ENCODE measurements at regions of chr11 and their contacts with region 1.

Region 1: DNA sequence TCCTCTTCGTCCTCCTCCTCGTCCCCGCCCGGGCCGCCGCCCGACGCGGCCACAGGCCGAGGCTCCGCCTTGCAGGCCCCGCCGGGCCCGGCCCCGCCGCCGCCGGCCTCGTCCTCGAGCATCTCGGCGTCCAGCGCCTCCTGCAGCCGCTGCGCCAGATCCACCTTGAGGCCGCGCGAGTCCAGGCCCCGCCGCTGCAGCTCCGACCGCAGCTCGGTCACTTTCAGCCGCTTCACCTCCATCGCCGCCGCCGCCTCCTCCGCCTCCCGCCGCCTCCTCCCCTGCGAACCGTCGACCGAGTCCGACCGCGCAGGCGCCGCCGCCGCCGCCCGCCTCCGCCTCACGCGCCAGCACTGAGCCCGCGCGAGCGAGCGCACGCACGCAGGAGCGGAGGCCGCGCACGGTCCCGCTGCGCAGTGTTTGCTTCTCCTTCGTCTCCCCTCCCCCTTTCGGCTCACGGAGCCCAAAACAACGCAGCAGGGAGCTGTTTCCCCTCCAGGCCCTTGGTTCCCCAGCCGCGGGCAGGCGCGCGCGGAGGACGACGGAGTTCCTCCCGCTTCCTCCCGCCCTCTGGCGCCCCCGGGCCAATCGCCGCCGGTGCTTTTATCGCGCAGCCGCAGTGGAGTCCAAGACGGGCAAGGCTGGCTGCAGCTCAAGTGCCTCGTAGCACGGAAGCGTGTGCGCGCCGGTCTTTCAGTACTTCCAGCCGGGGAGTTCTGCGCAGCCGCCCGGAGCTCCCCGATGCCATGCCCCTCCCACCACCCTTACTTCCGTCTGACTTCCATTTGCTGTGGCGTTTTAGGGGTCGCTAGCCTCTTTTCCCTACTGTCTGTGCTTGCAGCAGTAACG is at the start of gene HNRNPUL2:
- DNase-seq: peak; percentile 99
- ATAC-seq: peak; percentile 89
- H3K4me3 Mint-ChIP-seq: peak within 1 kb of the TSS; percentile 87
- H3K27ac Mint-ChIP-seq: peak within 1 kb of the TSS; percentile 97
- H3K4me1 Mint-ChIP-seq: peaks cover 41% of the 10 kb centered on the region
- H3K27me3 Mint-ChIP-seq: no peaks in the 10 kb centered on the region
- total RNA-seq, gene HNRNPUL2: 48.7 to 59.6 TPM

Region 2: DNA sequence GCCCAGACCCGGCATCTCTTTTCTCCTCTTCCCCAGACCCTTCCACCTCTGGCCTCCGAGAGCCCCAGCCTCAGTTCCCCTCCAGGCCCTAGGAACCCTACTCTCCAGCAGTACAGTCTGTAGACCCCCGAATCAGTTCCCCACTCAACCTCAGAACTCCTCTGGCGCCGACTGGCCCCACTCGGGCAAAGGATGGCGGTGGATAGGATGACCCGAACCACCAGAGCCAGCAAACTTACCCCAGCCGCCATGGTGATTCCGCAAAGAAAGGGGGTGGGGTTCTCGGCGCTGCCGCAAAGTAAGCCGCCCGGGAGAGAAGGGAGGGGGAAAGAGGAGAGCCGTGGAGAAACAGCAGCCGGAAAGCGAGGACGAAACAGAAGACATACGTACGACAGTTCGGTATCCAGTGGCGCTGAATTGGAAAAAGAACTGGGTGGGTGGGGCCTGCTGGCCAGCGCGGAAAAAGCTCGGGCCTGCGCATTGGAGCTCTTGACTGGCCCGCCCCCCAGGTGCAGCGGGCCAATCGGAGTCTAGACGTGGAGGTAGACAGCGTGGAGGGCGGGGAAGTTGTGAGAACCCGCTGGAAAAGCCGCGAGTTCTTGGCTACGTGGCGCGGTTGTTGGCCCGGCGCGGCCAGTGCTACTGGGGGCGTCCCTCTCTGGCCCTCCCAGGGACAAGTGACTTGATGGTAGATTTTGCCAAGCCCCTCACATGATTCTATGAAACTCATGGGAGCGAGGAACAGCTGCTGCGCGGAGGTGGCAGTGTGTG is 153.4 kb before region 1 on chr11 and contains the start of gene EEF1G:
- CTCF ChIA-PET with region 1: no interaction called
- POLR2A ChIA-PET with region 1: interaction called, 14 read pairs
- intact Hi-C with region 1: loop called in 1 of 2 experiments (anchors 1 kb)
- DNase-seq: peak; percentile 99
- ATAC-seq: peak; percentile 97
- H3K4me3 Mint-ChIP-seq: peak within 1 kb of the TSS; percentile 93
- H3K27ac Mint-ChIP-seq: peak within 1 kb of the TSS; percentile 97
- H3K4me1 Mint-ChIP-seq: peaks cover 43% of the 10 kb centered on the region
- H3K27me3 Mint-ChIP-seq: no peaks in the 10 kb centered on the region
- total RNA-seq, gene EEF1G: 1,986 to 2,351 TPM

Region 3: DNA sequence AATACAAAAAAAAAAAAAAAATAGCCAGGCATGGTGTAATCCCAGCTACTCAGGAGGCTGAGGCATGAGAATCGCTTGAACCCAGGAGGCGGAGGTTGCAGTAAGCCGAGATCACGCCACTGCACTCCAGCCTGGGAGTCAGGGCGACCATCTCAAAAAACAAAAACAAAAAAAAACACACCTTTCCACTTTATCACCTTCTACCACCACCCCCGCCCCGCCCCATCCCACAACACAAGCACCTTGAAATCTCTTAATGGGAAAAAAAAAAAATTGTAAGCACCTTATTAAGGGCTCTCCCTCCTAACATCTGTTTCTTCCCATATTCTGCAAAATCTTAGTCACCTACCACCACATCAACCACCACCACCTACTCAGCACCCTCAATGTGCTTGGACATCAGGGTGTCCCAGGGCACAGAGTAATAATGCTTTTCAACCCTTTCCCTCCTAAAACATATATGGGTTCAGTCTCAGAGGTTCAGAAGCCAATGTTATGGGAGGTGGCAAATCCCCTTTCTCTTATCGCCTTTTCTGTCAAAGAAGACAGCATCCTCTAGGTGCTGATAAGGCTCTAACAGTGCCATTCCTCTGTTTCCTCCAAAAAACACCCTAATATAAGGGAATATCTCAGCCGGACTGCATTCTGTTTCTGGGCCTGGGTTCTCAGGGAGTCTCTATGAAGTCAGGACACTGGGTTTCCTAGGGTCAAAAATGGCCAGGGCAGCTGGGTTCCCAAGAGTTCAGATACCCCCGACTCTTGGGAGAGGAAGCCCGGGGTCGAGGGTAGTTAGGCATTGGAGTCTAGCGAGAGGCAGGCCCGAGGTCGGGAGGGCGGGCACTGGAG is 74.8 kb before region 1 on chr11:
- CTCF ChIA-PET with region 1: no interaction called
- POLR2A ChIA-PET with region 1: interaction called, 13 read pairs
- intact Hi-C with region 1: loop called in 1 of 2 experiments (anchors 1 kb)
- DNase-seq: no peak
- ATAC-seq: no peak
- H3K4me3 Mint-ChIP-seq: peak overlapping the region; percentile 88
- H3K27ac Mint-ChIP-seq: peak overlapping the region; percentile 91
- H3K4me1 Mint-ChIP-seq: peaks cover 23% of the 10 kb centered on the region
- H3K27me3 Mint-ChIP-seq: no peaks in the 10 kb centered on the region

Region 4: GRCh38 chr11:62753736-62754603 is 26.8 kb after region 1 on chr11 and contains the start of gene ZBTB3:
- CTCF ChIA-PET with region 1: interaction called, 12 read pairs
- POLR2A ChIA-PET with region 1: interaction called, 32 read pairs
- intact Hi-C with region 1: loop called (anchors 1 kb)
- DNase-seq: peak; percentile 98
- ATAC-seq: peak; percentile 98
- H3K4me3 Mint-ChIP-seq: peak within 1 kb of the TSS; percentile 96
- H3K27ac Mint-ChIP-seq: peak within 1 kb of the TSS; percentile 97
- H3K4me1 Mint-ChIP-seq: peaks cover 26% of the 10 kb centered on the region
- H3K27me3 Mint-ChIP-seq: no peaks in the 10 kb centered on the region
- total RNA-seq, gene ZBTB3: 6.0 to 10.2 TPM

Region 5: DNA sequence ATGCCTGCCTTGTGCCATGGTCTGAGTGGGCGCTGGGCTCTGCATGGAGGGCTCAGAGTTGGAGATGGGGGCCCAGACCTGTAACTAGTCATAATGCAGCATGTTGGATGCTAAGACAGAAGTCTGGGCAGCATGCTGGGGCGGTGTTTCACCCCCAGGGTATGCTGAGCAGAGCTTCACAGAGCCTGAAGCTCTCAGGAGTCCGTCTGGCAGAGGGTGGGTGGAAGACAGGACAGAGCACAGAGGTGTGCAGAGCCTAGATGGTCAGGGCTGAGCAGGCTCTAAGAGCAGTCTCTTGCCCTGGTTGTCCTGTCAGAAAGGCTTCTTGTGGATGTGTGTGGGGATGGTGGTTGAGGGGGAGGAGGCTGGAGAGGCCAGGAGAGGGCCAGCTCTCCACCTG is 51.3 kb after region 1 on chr11:
- CTCF ChIA-PET with region 1: no interaction called
- POLR2A ChIA-PET with region 1: no interaction called
- intact Hi-C with region 1: no loop called
- DNase-seq: no peak
- ATAC-seq: no peak
- H3K4me3 Mint-ChIP-seq: no peak overlapping the region
- H3K27ac Mint-ChIP-seq: peak overlapping the region; percentile 15
- H3K4me1 Mint-ChIP-seq: peaks cover 21% of the 10 kb centered on the region
- H3K27me3 Mint-ChIP-seq: no peaks in the 10 kb centered on the region

Region 6: DNA sequence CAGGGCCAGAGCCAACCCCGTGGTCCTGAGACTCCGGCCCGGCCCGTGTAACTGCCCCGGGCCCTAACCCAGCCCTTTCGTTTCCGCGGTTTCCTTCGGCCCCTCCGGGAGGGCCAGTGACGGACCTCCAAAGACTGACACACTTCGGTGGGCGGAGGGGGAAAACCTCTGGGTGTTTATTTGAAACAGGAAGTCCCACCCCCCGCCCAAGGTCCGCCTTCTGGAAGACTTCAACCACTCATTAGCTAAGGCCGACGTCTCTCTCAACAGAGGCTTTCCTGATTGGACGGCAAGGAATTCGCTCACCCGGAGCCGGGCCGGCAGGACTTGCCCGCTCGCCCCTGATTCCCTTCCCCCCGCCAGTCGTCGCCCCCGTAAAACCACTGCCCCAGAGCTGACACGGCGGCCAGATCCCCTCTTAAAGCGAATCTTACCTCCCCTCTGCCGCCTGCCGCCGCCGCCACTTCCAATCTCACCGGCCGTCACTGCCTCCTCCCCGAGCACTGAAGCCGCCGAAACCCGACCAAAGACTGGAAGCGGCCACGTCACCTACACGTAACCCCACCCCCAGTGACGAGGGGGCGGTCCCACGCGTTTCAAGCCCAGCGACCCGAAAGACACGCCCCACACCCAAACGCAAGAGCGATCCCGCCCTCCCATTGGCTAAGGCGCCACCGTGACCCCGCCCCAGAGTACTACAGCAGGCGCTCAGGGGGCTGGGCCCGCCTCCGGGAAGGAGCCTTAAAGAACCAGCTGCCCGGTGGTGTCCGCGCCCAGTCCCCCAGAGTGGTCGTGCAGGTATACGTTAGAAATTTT is 104.6 kb after region 1 on chr11 and contains the start of gene STX5:
- CTCF ChIA-PET with region 1: interaction called, 3 read pairs
- POLR2A ChIA-PET with region 1: interaction called, 3 read pairs
- intact Hi-C with region 1: loop called in 1 of 2 experiments (anchors 1 kb)
- DNase-seq: peak; percentile 100
- ATAC-seq: peak; percentile 95
- H3K4me3 Mint-ChIP-seq: peak within 1 kb of the TSS; percentile 84
- H3K27ac Mint-ChIP-seq: peak within 1 kb of the TSS; percentile 99
- H3K4me1 Mint-ChIP-seq: peaks cover 38% of the 10 kb centered on the region
- H3K27me3 Mint-ChIP-seq: no peaks in the 10 kb centered on the region
- total RNA-seq, gene STX5: 19.3 to 21.8 TPM

Region 7: DNA sequence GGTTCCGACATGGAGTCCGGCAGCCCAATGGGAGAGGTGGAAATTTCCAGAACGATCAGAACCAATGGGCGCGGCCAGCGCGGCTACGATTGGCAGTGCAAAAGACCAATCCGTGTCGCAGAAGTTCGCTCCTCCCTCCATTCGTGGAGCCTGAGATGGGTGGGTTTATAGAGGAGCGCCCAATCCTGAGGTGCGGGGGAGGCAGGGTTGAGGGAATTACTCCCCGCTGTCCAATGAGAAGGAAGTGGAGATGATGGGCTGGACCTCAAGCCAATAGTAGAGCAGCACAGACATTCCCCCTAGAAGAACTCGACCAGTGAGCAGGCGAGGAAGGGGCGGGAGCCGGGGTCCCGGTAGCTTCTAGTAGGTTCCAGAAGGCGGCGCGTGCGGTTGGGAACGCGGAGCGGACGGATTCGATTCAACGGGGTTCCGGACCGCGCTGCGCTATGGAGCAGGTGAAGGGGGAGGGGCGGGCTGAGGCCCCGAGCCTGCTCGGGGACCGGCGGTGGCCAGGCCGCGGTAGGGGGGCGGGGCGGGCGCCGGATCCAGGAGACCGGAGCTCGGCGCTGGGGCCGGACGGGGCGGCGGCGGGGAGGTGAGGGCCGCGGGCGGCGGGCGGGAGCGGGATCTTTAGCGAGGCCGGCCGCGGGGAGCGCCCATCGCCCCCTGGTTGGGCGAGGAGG is 1458.8 kb after region 1 on chr11 and contains the start of gene STIP1:
- CTCF ChIA-PET with region 1: no interaction called
- POLR2A ChIA-PET with region 1: no interaction called
- intact Hi-C with region 1: loop called in 1 of 2 experiments (anchors 5 kb)
- DNase-seq: peak; percentile 99
- ATAC-seq: peak; percentile 92
- H3K4me3 Mint-ChIP-seq: no peak within 1 kb of the TSS
- H3K27ac Mint-ChIP-seq: peak within 1 kb of the TSS; percentile 92
- H3K4me1 Mint-ChIP-seq: peaks cover 42% of the 10 kb centered on the region
- H3K27me3 Mint-ChIP-seq: no peaks in the 10 kb centered on the region
- total RNA-seq, gene STIP1: 398 to 403 TPM